Activated naive CD8-positive, alpha-beta T cell treated with anti-CD3 and anti-CD28 coated beads, Interleukin-2, amount 10 ng/mL, durations not matched to agents 7 days and 5 days (primary cell): ENCODE measurements at regions of chr11 and their contacts with region 1.

Region 1: DNA sequence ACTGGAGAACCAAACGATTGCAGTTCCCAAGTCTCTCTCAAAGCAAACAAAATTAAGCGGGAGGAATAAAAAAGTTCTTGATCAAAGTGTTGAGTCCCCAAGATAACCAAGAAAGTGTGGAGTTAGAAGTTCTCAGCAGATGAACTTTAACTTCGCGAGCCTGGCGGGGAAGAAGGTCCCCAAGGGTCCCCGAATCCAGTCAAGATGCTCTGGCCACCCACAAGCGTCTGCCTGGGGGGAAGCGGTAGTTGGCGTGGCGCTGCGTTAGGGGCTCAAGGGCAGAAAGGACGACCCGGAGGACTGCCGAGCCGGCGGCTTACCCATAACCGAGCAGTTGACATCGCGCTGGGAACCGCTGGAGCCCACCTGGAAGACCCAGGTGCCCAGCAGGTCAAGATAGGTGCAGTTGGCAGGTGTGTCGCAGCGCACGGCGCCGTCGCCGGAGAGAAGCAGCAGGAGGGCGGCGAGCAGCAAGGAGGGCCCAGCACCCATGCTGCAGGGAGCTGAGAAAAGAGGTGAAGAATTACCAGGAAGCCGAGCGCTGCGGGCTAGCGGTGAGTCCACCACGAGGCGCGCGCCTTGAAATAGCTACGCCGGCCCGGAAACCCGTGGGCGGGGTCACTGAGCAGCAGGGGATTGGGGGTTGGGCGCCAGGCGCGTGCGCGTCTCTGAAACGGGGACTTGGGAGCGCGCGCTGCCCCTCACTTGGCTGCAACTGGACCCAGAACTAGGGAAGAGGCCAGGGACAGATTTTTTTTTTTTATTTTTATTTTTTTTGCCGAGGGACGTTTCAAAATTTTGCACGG is at the start of gene CTSC:
- DNase-seq: peak; percentile 95
- ATAC-seq: peak; percentile 91
- H3K4me3 Mint-ChIP-seq: peak within 1 kb of the TSS; percentile 93
- H3K27ac Mint-ChIP-seq: peak within 1 kb of the TSS; percentile 97
- H3K4me1 Mint-ChIP-seq: peaks cover 57% of the 10 kb centered on the region
- H3K27me3 Mint-ChIP-seq: no peaks in the 10 kb centered on the region
- total RNA-seq, gene CTSC: 131 to 134 TPM

Region 2: DNA sequence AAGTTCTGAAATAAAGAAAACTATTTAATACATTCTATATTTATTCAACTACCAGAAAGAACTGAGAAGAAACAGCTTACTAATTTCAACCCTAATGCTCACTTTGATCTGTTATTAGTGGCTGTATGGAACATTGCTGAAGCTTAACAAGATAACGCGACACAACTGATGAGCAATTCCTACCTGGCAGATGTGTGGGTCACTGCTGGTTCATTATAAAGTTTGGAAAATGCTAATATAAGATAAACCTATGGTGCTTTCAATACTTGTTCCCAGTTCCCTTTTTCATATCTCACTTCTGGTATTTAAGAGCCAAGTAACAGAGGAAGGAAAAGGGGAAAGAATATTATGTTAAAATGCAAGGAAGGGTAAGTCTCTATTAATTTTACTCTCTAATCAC is 10.3 kb before region 1 on chr11:
- POLR2A ChIA-PET with region 1: interaction called, 29 read pairs
- DNase-seq: no peak
- ATAC-seq: no peak
- H3K4me3 Mint-ChIP-seq: no peak overlapping the region
- H3K27ac Mint-ChIP-seq: no peak overlapping the region
- H3K4me1 Mint-ChIP-seq: peaks cover 60% of the 10 kb centered on the region
- H3K27me3 Mint-ChIP-seq: no peaks in the 10 kb centered on the region

Region 3: GRCh38 chr11:88357323-88358039 is 20.1 kb after region 1 on chr11:
- POLR2A ChIA-PET with region 1: interaction called, 35 read pairs
- DNase-seq: no peak
- ATAC-seq: no peak
- H3K4me3 Mint-ChIP-seq: peak overlapping the region; percentile 31
- H3K27ac Mint-ChIP-seq: peak overlapping the region; percentile 71
- H3K4me1 Mint-ChIP-seq: peaks cover 35% of the 10 kb centered on the region
- H3K27me3 Mint-ChIP-seq: no peaks in the 10 kb centered on the region

Region 4: DNA sequence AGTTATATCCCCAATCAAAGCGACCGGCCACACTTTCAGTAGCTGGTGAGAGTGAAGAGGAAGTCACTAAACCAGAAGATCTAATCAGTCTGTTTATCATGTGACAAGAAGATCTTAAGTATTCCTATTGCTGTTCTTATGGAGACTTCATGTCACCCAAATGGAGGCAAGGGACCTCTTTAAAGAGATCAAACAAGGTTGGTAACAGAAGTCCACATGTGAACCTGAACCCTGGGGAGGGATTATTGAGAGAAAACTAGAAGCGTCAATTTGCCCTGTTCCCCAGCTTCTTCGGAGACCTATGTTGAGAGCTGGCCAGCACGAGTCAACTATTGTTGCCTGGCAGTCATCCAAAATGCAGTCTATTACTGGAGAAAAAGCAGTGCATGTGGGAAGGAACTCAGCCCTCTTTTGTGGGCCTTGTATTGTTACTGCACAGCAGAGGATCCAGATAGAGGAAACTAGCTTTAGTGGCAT is 77.0 kb after region 1 on chr11:
- POLR2A ChIA-PET with region 1: interaction called, 13 read pairs
- DNase-seq: no peak
- ATAC-seq: peak; percentile 63
- H3K4me3 Mint-ChIP-seq: peak overlapping the region; percentile 65
- H3K27ac Mint-ChIP-seq: peak overlapping the region; percentile 72
- H3K4me1 Mint-ChIP-seq: peaks cover 46% of the 10 kb centered on the region
- H3K27me3 Mint-ChIP-seq: no peaks in the 10 kb centered on the region